Right cardiac atrium (tissue), 5 donors: ENCODE measurements at regions of chr10 and their contacts with region 1.

Region 1: DNA sequence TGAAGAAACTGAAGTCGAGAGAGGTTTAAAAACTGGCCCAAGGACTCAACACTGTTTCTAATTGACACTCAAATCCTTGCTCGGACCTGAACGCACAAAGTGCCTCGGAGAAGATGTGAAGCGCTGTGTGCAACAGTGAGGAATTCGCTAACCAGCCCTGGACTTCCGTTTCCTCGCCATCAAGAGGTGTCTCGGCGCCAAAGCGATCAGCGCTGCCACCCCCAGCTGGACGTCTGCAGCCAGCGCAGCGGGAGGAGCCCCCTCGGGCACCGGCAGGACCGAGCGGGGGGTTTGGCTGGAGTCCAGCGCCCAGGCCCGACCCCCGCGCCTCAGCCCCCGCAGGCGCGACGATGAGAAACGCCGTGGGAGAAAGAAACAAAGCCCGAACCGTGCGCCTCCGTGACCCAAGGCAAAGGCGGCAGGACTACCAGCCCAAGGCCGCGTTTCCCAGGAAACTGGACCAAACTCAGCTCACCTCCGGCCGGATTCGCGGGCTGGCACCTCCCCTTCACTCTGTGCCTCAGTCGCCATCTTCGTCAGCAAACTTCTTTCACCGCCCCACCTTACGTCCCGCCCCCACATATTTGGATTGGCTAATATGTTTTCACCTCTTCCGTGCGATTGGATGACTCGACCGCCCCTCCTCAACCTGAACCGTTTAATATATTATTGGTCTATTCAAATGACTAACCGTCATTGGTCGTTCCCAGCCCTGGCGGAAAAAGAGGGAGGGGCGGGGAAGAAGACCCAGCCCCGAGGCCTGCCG is at the start of gene ARHGAP19:
- DNase-seq: peak; percentile 96 to 97 (median 96)
- ATAC-seq: peak; percentile 99
- H3K4me3 ChIP-seq: peak within 1 kb of the TSS; percentile 75
- H3K27ac ChIP-seq: peak within 1 kb of the TSS; percentile 91
- H3K4me1 ChIP-seq: peaks cover 2% of the 10 kb centered on the region
- H3K27me3 ChIP-seq: no peaks in the 10 kb centered on the region
- total RNA-seq, gene ARHGAP19: 3.6 to 6.3 (median 5.3) TPM

Region 2: DNA sequence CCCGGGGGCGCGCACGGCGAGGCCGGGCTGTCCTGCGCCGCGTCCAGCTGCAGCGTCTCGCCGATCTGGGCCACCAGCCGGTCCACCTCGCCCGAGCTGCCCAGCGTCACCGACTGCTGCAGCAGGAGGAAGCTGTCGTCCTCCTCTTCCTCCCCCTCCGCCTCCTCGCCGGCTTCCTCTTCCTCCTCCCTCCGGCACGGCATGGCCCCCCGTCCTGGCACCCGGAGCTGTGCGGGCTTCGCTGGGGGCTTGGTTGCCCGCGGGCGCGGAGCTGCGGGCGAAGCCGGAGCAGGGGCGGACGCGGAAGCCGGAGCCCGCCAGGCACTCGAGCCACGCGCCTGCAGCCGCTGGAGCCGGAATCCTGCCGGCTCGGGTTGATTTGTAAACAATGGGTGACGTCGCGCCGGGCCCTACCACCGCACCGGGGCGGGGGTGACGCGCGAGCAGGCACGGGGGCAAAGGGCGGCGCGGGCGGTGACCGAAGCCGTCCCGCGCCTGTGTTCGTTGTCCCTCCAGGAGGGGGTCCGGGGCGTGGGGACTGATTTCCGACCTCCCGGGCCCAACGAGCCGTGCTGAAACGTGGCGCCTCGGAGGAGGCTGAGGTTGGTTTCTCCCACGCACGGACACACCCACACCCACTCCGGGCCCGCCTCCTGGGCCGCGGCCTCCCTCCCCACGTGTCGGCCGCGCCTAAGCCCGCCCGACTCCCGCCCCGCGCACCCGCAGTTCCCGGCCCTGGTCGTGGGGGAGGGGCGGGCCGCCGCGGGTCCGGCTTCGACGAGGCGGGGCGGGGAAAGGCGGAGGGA is 42.3 kb after region 1 on chr10 and contains the start of gene FRAT2:
- intact Hi-C with region 1: loop called in 2 of 4 experiments (anchors 5 to 10 kb)
- DNase-seq: peak; percentile 92 to 97 (median 97)
- ATAC-seq: peak; percentile 98
- H3K4me3 ChIP-seq: peak within 1 kb of the TSS; percentile 67
- H3K27ac ChIP-seq: peak within 1 kb of the TSS; percentile 59
- H3K4me1 ChIP-seq: peaks cover 8% of the 10 kb centered on the region
- H3K27me3 ChIP-seq: no peaks in the 10 kb centered on the region
- total RNA-seq, gene FRAT2: 5.0 to 7.6 (median 7.5) TPM